Right ventricle myocardium inferior (tissue), 1 donor: ENCODE measurements at regions of chr11 and their contacts with region 1.

Region 1: GRCh38 chr11:18588297-18589252 is at the start of gene UEVLD:
- DNase-seq: peak; percentile 93
- ATAC-seq: peak; percentile 98
- total RNA-seq, gene UEVLD: 18.0 TPM

Region 2: DNA sequence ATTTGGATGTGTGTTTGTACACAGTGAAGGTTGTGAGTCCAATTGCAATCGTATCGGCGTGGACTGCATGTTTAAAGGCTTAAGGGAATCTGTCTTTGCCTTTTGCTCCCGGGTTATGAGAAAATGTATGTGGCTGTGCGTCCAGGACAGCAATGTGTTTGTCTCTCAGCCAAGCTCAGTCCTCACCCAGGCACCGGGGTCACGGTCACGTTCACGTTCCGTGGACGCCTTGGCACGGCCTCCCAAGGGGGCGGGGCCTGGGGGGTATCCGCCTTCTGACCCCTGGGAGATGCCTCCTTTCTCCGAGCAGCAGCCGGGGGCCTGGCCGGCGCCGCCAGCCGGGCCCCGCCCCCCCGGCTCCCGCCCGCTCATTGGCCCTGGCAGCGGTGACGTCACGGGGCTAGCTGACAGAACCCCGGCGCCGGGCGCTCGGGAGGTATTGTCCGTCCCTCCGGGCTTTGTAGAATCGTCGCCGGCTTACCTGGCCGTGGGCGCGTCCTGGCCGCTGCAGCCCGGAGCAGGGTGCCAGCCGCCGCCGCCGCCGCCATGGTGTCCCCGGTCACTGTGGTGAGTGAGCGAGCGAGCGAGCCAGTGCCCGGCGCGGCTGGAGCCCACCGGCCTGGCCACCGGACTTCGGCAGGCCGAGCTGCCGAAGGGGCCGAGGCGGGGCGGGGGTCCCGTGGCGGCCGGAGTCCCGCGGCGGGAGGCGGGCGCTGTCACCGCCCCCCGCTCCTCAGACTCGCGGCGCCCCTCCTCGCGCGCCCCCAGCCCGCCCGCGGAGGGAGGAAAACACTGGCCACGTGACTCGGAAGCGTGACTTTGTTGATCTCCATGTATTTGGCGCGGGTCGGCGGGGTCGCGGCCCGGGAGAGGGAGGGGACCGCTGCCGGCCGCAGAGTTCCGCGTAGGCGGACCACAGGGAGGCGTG is 110.0 kb after region 1 on chr11 and contains the start of gene TMEM86A:
- intact Hi-C with region 1: loop called (anchors 2 kb)
- DNase-seq: peak; percentile 97
- ATAC-seq: peak; percentile 92
- total RNA-seq, gene TMEM86A: 4.6 TPM